Caco-2 (cell line): ENCODE measurements at regions of chr4 and their contacts with region 1.

Region 1: GRCh38 chr4:104470770-104471169 is 23.9 kb downstream of the CXXC4 start:
- DNase-seq: peak; percentile 64 to 77
- H3K4me3 ChIP-seq: no peak overlapping the region
- H3K4me3 Mint-ChIP-seq: peak overlapping the region; percentile 41
- H3K27ac Mint-ChIP-seq: peak overlapping the region; percentile 70
- H3K4me1 ChIP-seq: peaks cover 13% of the 10 kb centered on the region
- H3K4me1 Mint-ChIP-seq: peaks cover 8% of the 10 kb centered on the region
- H3K27me3 ChIP-seq: no peaks in the 10 kb centered on the region
- H3K27me3 Mint-ChIP-seq: no peaks in the 10 kb centered on the region
- CTCF ChIP-seq: no peak

Region 2: DNA sequence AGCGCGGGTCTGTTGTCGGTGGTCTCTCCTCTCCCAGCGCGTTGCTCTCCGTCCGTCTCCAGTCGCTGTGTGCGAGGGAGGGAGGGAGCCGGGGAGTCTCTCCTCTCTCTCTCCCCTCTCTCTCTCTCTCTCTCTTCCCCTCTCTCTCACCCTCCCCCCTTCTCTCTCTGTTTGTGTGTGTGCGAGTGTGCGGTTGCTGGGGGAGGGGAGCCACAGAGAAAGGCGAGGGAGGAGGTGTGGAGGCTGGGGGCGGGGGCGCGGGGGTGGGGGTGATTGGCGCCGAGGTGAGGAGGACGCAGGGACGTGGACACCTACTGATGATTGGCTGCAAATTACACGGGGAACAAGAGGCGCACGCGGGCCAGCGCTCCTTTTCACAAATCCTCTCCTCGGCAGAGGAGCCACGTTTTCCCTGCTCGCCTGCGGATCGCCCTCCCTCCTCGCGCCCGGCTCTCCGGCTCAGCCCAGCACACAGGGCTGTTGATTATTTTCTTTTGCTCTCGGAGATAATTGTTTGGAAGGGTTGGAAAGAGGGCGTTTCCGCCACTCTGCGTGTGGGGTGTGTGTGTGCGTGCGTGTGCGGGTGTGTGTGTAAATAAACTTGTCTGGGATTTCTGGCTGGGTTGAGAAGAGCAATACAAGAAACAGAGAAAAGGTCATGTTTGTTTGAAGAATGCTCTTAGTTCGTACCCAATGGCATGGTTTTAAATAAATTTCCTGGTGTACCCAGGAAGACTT is 24.2 kb after region 1 on chr4 and contains the start of gene CXXC4:
- CTCF ChIA-PET with region 1: no interaction called
- POLR2A ChIA-PET with region 1: no interaction called
- intact Hi-C with region 1: loop called (anchors 1 kb)
- DNase-seq: peak; percentile 67 to 74
- H3K4me3 ChIP-seq: peak within 1 kb of the TSS; percentile 54
- H3K4me3 Mint-ChIP-seq: peak within 1 kb of the TSS; percentile 96
- H3K27ac Mint-ChIP-seq: peak within 1 kb of the TSS; percentile 86
- H3K4me1 ChIP-seq: peaks cover 15% of the 10 kb centered on the region
- H3K4me1 Mint-ChIP-seq: peaks cover 6% of the 10 kb centered on the region
- H3K27me3 ChIP-seq: no peaks in the 10 kb centered on the region; the same call in 1 of the 2 replicates
- H3K27me3 Mint-ChIP-seq: no peaks in the 10 kb centered on the region
- CTCF ChIP-seq: no peak
- total RNA-seq, gene CXXC4: 2.9 and 3.1 TPM in 2 replicates

Region 3: DNA sequence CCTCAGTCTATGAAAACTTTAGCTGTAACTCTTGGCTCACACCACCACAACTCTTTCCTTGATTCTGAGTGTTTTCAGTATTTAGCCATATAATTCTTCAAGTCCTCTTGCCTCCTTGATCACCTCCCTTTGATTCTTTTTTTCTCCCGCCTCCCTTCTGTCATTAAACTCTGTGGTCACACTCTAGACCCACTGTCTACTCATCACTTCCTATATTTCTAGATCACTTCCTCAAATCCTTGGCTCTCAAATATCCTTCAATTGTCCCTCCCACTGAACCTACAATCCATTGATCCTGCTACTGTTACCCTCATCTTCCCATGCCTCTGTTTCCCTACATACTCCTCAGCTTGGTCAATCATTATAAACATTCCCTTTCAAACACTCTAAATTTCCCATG is 36.3 kb after region 1 on chr4:
- CTCF ChIA-PET with region 1: no interaction called
- POLR2A ChIA-PET with region 1: no interaction called
- intact Hi-C with region 1: loop called (anchors 1 kb)
- DNase-seq: no peak
- H3K4me3 ChIP-seq: no peak overlapping the region
- H3K4me3 Mint-ChIP-seq: no peak overlapping the region
- H3K27ac Mint-ChIP-seq: no peak overlapping the region
- H3K4me1 ChIP-seq: peaks cover 56% of the 10 kb centered on the region
- H3K4me1 Mint-ChIP-seq: peaks cover 25% of the 10 kb centered on the region
- H3K27me3 ChIP-seq: no peaks in the 10 kb centered on the region
- H3K27me3 Mint-ChIP-seq: no peaks in the 10 kb centered on the region
- CTCF ChIP-seq: no peak